ENCODE measurements at regions of chrX and their contacts with region 1.

Region 1: DNA sequence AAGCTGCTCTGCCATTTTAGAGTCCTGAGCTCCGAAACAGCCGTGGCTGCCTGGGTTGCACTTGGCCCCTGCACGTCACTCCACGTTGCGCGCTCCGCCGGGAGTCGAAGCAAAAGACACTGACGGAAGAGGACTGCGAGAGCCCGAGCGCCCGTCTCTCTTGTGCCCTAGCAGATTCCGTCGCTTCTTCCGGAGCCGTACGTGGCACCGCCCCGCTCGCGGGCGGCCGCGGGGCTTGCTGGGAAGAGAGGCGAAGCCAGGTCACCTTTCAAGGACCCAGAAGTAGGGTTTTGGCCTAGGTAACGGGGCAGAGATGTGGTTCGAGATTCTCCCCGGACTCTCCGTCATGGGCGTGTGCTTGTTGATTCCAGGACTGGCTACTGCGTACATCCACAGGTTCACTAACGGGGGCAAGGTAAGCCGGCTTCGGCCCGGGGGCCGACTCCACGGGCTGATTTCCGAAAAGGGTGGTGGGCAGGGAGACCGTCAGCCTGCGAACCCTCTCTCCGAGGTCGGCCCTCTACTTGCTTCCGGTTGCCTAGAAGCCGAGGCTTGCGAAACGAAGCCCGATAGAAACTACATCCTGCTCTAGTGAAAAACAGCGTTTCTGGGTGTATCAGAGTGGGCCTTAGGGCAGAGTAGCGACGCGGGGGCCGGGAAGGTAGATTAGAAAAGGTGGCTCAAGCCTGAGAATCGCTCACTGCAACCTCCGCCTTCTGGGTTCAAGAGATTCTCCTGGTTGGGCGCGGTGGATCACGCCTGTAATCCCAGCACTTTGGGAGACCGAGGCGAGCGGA is at the starts of genes NDUFA1 and RNF113A:
- DNase-seq: peak; percentile 86
- H3K4me3 Mint-ChIP-seq: peak within 1 kb of the TSS; percentile 97
- H3K27ac Mint-ChIP-seq: peak within 1 kb of the TSS; percentile 98
- H3K4me1 Mint-ChIP-seq: peaks cover 13% of the 10 kb centered on the region
- H3K27me3 Mint-ChIP-seq: no peaks in the 10 kb centered on the region
- total RNA-seq, gene NDUFA1: 105 to 107 TPM
- total RNA-seq, gene RNF113A: 20.8 to 22.0 TPM

Region 2: GRCh38 chrX:119574394-119575266 is 297.2 kb before region 1 on chrX and contains the start of gene UBE2A:
- CTCF ChIA-PET with region 1: no interaction called
- intact Hi-C with region 1: loop called (anchors 5 kb)
- DNase-seq: peak; percentile 89
- H3K4me3 Mint-ChIP-seq: peak within 1 kb of the TSS; percentile 91
- H3K27ac Mint-ChIP-seq: peak within 1 kb of the TSS; percentile 89
- H3K4me1 Mint-ChIP-seq: peaks cover 12% of the 10 kb centered on the region
- H3K27me3 Mint-ChIP-seq: no peaks in the 10 kb centered on the region
- total RNA-seq, gene UBE2A: 46.1 to 49.8 TPM

Region 3: DNA sequence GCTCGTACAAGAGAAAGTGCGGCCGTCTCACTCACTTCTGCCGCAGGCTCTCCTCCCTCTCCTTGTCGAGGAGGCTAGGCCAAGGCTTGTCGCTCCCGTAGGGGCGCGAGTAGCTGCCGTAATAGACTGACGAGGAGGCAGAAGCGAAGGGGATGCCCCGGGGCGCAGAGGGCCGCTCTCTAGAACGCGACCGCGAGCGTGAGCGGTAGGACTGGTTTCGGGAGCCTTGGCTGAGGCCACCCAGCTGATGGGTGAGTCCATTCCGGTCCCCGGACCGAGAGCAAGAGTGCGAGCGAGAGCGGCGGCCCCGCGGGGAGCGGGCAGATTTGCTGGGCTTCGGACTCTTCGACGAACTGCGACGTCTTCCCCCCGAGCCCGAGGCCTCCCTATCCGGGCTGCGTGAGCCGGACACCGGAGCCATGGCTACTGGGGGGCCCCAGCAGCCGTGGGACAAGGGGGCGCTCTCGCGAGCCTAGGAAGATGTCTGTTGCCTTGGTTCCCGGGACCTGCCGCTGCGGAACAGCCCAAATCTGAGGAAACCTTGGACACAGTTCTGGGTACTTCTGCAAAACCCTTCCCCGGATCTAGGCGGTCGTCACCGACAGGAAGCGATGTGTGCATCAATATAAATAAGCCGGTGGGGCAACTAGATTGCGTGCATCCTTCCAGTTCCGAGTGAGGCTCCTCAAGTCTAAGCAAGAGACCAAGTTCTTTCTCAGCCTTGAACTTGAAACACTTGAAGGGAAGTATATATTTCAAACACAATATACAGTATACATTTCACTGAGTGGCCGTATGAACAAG is 71.6 kb after region 1 on chrX and contains the start of gene NKAP:
- CTCF ChIA-PET with region 1: no interaction called
- intact Hi-C with region 1: loop called (anchors 1 kb)
- DNase-seq: peak; percentile 86
- H3K4me3 Mint-ChIP-seq: peak within 1 kb of the TSS; percentile 98
- H3K27ac Mint-ChIP-seq: peak within 1 kb of the TSS; percentile 95
- H3K4me1 Mint-ChIP-seq: peaks cover 23% of the 10 kb centered on the region
- H3K27me3 Mint-ChIP-seq: no peaks in the 10 kb centered on the region
- total RNA-seq, gene NKAP: 12.3 to 12.7 TPM